Activated CD4-positive, alpha-beta T cell treated with anti-CD3 and anti-CD28 coated beads for 36 hours (primary cell): ENCODE measurements at regions of chr2 and their contacts with region 1.

Region 1: DNA sequence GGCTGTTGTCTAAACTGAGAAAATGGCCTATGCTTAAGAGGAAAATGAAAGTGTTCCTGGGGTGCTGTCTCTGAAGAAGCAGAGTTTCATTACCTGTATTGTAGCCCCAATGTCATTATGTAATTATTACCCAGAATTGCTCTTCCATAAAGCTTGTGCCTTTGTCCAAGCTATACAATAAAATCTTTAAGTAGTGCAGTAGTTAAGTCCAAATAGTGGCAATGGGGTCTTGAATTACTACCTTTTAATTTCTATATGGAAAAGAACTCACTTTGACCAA is 13.8 kb upstream of the ALLC start:
- DNase-seq: no peak
- ATAC-seq: no peak
- H3K4me3 Mint-ChIP-seq: no peak overlapping the region
- H3K27ac Mint-ChIP-seq: no peak overlapping the region
- H3K4me1 Mint-ChIP-seq: no peaks in the 10 kb centered on the region
- H3K27me3 Mint-ChIP-seq: no peaks in the 10 kb centered on the region

Region 2: DNA sequence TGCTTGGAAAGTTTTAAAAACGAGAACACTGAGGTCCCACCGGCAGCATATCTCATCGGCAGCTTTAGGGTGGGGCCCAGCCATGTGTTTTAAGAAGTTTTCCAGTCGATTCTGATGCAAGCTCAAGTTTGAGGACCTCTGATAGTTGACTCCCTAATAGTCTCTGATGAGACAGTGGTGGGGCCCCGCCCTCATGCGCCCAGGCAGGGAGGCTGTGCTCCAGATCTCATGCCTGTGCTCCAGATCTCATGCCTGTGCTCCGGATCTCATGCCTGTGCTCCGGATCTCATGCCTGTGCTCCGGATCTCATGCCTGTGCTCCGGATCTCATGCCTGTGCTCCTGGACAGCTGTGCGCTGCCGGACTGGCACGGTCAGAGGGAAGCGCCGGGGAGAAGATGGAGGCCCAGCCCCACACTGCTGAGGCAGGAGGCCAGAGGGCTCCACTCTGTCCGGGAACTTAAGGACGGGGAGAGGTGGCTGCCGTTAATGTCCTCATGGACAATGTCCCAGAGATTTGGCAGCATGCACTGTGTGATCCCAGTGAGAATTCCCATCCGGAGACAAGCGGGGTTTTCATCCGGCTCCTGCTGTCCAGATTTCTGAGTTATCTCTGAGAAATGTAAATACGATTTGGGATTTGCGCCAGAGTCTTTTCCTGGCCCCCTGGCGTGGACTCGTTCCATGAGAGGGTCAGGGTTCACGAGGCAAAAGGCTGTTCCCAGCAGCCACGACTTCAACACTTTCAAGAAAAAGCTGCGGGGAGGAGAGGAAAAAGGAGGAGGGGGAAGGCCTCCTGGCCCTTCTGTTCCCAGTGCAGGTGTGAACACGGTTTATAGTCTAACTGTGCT is 58.7 kb before region 1 on chr2:
- CTCF ChIA-PET with region 1: interaction called, 3 read pairs
- POLR2A ChIA-PET with region 1: interaction called, 12 read pairs
- intact Hi-C with region 1: no loop called
- DNase-seq: no peak
- ATAC-seq: no peak
- H3K4me3 Mint-ChIP-seq: no peak overlapping the region
- H3K27ac Mint-ChIP-seq: no peak overlapping the region
- H3K4me1 Mint-ChIP-seq: peaks cover under 1% of the 10 kb centered on the region
- H3K27me3 Mint-ChIP-seq: no peaks in the 10 kb centered on the region

Region 3: DNA sequence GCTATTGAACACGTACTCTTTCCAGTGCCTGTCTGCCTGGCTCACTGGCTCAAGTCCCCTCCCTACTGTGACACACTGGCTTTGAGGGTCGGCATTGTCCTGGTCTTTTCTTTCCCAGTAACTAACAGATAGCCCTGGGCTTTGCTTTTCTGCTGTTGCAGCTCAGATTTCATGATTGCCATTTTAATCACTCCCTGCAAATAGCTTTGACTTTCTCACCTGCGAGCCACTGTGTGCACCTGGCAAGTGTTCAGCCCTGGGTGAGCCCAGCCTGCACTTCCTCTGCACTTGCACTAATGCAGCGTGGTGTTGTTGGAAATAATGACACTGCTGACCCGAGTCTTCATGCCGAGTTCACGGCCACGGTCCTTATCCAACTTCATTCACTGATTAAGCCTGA is 112.1 kb after region 1 on chr2:
- CTCF ChIA-PET with region 1: no interaction called
- POLR2A ChIA-PET with region 1: no interaction called
- intact Hi-C with region 1: no loop called
- DNase-seq: no peak
- ATAC-seq: no peak
- H3K4me3 Mint-ChIP-seq: no peak overlapping the region
- H3K27ac Mint-ChIP-seq: no peak overlapping the region
- H3K4me1 Mint-ChIP-seq: no peaks in the 10 kb centered on the region
- H3K27me3 Mint-ChIP-seq: peaks cover 10% of the 10 kb centered on the region

Region 4: DNA sequence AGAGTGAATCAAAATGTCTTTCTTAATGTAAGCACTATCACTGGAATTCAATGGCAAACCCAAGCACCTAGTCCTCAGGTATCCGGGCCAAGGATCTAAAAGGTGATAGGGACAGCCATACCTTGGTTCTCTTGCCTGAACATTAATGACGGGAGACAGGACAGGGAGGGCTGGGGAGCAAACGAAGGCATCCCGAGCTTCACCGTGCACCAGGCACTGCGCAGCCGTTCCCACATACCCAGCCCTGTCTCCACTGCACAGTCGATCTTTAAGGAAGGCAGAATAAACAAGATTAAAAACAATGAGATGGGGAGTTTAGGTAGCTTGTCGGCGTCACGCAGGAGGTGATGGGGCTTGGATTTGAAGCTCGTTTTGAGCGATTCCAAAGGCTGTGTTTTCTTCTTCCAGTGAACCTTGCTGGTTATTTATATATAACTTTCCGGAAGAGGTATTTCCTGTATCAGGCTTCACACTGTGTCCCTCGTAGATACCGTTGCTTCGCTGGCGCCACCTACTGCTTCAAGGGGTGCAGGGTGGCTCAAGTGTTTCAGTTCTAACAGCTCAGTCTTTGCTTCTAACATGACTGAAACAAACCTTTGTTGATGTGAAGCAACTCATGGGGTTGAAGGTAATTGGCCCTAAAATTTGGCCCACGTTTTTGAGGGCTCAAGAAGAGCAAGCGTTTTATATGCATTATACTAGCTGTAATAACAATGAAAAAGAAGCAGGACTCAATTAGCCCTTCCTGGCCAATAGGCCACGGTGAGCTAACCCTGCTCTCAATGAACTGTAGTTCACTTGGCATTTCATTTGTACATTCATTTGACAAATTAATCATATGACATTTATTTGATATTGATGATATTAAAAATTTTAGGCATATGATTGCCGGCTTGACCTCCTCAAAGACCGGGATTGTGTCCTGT is 136.6 kb after region 1 on chr2:
- CTCF ChIA-PET with region 1: no interaction called
- POLR2A ChIA-PET with region 1: no interaction called
- intact Hi-C with region 1: no loop called
- DNase-seq: peak; percentile 86
- ATAC-seq: peak; percentile 100
- H3K4me3 Mint-ChIP-seq: peak overlapping the region; percentile 29
- H3K27ac Mint-ChIP-seq: peak overlapping the region; percentile 45
- H3K4me1 Mint-ChIP-seq: peaks cover 11% of the 10 kb centered on the region
- H3K27me3 Mint-ChIP-seq: peaks cover 29% of the 10 kb centered on the region